Activated CD8-positive, alpha-beta T cell treated with anti-CD3 and anti-CD28 coated beads for 36 hours (primary cell): ENCODE measurements at regions of chr11 and their contacts with region 1.

Region 1: GRCh38 chr11:128052912-128053641 is 534.3 kb downstream of the ETS1 start:
- DNase-seq: no peak
- ATAC-seq: peak; percentile 55
- H3K4me3 Mint-ChIP-seq: peak overlapping the region; percentile 46
- H3K27ac Mint-ChIP-seq: peak overlapping the region; percentile 92
- H3K4me1 Mint-ChIP-seq: peaks cover 69% of the 10 kb centered on the region
- H3K27me3 Mint-ChIP-seq: no peaks in the 10 kb centered on the region
- CTCF ChIP-seq: no peak

Region 2: DNA sequence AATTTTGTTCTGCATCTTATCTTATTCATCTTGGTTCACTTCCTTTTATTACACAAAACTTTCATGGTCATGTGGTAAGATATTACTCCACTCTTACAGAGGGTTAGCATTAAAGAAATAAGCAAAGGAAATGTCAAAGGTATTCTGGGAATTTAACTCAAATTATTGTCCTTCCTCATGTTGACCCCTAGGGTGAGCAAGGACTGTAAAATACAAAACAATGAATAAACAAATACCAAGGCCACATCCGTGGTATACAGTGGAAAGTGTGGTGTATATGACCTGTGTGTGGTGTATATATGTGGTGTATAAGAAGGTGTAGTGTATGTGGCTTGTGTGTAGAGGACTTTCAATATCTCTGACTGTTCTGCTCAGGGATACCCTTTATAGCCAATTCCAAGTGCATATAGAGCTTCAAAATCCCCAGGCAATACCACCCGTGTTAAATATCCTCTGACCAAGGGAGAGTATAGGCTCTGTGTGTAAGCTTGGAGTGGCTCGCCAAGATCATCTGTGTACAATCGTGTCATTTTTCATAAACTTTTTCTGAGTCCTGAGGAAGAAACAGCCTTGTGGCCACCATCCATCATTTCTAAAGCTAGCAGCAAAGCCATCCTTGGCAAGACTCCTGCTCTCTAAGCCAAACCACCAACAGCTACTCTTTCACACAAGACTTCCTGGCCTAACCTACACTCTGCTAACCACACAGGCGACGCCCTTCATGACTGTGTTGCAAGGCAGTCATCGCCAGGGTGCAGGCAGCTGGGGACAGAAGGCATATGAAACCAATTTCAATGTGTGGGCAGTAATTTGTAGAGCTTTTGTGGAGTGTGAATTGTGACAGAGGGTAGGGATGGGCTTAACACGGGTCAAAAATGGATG is 13.7 kb before region 1 on chr11:
- CTCF ChIA-PET with region 1: interaction called, 65 read pairs
- POLR2A ChIA-PET with region 1: interaction called, 28 read pairs
- intact Hi-C with region 1: no loop called
- DNase-seq: peak; percentile 91
- ATAC-seq: peak; percentile 90
- H3K4me3 Mint-ChIP-seq: peak overlapping the region; percentile 58
- H3K27ac Mint-ChIP-seq: peak overlapping the region; percentile 93
- H3K4me1 Mint-ChIP-seq: peaks cover 42% of the 10 kb centered on the region
- H3K27me3 Mint-ChIP-seq: no peaks in the 10 kb centered on the region
- CTCF ChIP-seq: peak; percentile 45

Region 3: DNA sequence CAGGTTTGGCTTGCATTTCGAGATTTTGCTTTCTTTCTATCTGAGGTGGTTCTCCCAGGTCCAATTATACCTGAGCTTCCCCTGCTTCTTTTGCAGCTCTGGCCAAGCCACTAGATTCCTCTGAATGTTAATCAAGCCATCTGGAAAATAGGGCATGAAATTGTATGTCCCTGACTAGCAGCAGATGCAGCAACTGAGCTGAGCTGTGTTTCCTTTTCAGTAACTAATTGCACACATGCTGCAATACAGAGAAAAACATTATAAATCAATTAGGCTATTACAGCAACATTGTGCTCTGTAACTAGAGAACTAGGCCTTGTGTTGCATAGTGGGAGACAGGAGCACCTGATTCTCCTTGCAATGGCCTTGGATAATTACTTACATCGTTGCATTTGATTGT is 126.0 kb after region 1 on chr11:
- CTCF ChIA-PET with region 1: no interaction called
- POLR2A ChIA-PET with region 1: no interaction called
- intact Hi-C with region 1: no loop called
- DNase-seq: no peak
- ATAC-seq: no peak
- H3K4me3 Mint-ChIP-seq: no peak overlapping the region
- H3K27ac Mint-ChIP-seq: no peak overlapping the region
- H3K4me1 Mint-ChIP-seq: peaks cover 27% of the 10 kb centered on the region
- H3K27me3 Mint-ChIP-seq: no peaks in the 10 kb centered on the region
- CTCF ChIP-seq: no peak